ENCODE measurements at regions of chr1 and their contacts with region 1.

Region 1: DNA sequence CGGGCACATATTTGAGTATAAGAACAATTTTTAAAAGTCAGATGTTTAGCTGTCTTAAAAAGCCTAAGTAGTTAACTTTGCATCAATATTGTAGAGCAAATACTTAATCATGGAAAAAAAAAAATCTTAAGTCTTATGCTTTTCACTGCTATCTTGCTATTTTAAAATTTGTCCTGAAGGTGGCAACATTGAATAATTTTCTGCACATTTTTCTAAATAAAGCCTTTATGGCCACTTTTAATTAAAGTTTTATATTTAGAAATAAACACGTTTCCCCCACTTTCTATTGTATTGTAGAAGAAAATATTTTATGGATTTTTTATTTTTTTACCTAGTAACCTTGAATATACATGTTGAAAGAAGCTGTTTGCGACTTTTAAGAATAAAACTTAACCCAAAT is 198.8 kb downstream of the AMY1C start:
- DNase-seq: no peak
- H3K4me3 Mint-ChIP-seq: no peak overlapping the region
- H3K27ac Mint-ChIP-seq: no peak overlapping the region
- H3K4me1 Mint-ChIP-seq: peaks cover 8% of the 10 kb centered on the region
- H3K27me3 Mint-ChIP-seq: no peaks in the 10 kb centered on the region
- CTCF ChIP-seq: no peak

Region 2: DNA sequence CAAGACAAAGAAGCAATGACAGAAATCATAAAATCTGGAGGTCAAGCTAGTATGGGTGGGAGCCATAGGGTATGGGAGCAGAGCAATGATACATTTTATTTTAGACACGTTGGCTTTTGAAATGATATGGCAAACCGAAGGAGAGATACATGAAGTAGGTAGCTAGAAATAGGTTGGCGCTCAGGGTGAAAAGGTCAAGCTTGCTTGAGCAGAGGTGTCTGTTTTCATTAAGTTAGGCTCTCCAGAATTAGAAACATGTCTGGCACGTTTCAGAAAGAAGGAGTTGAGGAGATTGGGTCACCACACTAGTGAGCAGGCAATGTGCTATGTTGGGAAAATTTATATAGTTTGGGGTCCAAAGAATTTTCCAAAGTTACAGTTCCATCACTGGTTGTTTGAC is 47.5 kb before region 1 on chr1:
- CTCF ChIA-PET with region 1: no interaction called
- intact Hi-C with region 1: no loop called
- DNase-seq: no peak
- H3K4me3 Mint-ChIP-seq: no peak overlapping the region
- H3K27ac Mint-ChIP-seq: no peak overlapping the region
- H3K4me1 Mint-ChIP-seq: no peaks in the 10 kb centered on the region
- H3K27me3 Mint-ChIP-seq: no peaks in the 10 kb centered on the region
- CTCF ChIP-seq: no peak

Region 3: GRCh38 chr1:104028416-104029035 is 80.0 kb after region 1 on chr1:
- CTCF ChIA-PET with region 1: no interaction called
- intact Hi-C with region 1: no loop called
- DNase-seq: no peak
- H3K4me3 Mint-ChIP-seq: no peak overlapping the region
- H3K27ac Mint-ChIP-seq: no peak overlapping the region
- H3K4me1 Mint-ChIP-seq: peaks cover 8% of the 10 kb centered on the region
- H3K27me3 Mint-ChIP-seq: no peaks in the 10 kb centered on the region
- CTCF ChIP-seq: no peak

Region 4: DNA sequence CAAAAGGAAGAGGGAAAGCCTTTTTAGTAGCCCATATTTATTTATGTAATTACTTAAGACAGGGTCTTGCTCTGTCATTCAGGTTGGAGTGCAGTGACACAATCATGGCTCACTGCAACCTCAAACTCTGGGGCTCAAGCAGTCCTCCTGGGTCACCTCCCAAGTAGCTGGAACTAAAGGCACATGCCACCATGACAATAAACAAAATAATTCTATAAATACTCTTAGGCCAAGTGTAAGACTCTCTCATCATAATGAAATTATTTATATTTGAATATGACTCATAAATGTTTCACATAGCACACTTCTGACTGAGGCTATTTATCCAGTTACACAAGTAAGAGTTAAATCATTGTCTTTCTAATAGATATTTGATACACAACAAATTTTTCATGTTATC is 115.9 kb after region 1 on chr1:
- CTCF ChIA-PET with region 1: no interaction called
- intact Hi-C with region 1: loop called (anchors 5 kb)
- DNase-seq: peak; percentile 10
- H3K4me3 Mint-ChIP-seq: no peak overlapping the region
- H3K27ac Mint-ChIP-seq: no peak overlapping the region
- H3K4me1 Mint-ChIP-seq: no peaks in the 10 kb centered on the region
- H3K27me3 Mint-ChIP-seq: no peaks in the 10 kb centered on the region
- CTCF ChIP-seq: no peak

Region 5: DNA sequence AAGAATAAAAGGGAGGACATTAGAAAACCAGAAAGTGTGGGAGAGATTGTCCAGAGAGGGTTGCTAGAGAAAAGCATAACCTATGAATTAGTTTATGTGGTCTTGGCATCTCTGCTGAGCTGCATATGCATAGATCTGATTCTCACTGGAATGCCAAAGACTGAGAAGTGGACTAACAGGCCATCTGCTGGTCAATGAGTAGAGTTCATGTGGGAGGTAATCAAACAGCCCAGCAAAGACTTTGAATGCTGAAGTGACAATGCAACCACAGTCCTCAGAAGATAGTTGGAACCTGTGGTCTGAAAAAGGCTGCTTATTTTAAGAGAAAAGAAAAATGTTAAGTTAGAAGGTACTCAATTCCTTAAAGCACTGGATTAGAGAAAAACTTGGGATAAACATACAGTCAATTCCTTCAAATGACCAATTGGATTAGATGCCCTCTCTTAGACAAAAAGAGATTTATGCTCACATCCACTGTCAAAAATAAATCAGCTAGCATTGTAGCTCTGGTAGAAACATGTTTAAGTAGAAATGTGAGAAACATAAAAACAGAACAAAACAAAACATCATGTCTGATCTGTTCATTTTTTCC is 184.0 kb after region 1 on chr1:
- CTCF ChIA-PET with region 1: interaction called, 5 read pairs
- intact Hi-C with region 1: loop called (anchors 1 kb)
- DNase-seq: peak; percentile 8
- H3K4me3 Mint-ChIP-seq: no peak overlapping the region
- H3K27ac Mint-ChIP-seq: no peak overlapping the region
- H3K4me1 Mint-ChIP-seq: no peaks in the 10 kb centered on the region
- H3K27me3 Mint-ChIP-seq: no peaks in the 10 kb centered on the region
- CTCF ChIP-seq: no peak

Region 6: GRCh38 chr1:104156738-104157137 is 208.2 kb after region 1 on chr1:
- CTCF ChIA-PET with region 1: no interaction called
- intact Hi-C with region 1: no loop called
- DNase-seq: no peak
- H3K4me3 Mint-ChIP-seq: no peak overlapping the region
- H3K27ac Mint-ChIP-seq: no peak overlapping the region
- H3K4me1 Mint-ChIP-seq: no peaks in the 10 kb centered on the region
- H3K27me3 Mint-ChIP-seq: no peaks in the 10 kb centered on the region
- CTCF ChIP-seq: no peak

Region 7: DNA sequence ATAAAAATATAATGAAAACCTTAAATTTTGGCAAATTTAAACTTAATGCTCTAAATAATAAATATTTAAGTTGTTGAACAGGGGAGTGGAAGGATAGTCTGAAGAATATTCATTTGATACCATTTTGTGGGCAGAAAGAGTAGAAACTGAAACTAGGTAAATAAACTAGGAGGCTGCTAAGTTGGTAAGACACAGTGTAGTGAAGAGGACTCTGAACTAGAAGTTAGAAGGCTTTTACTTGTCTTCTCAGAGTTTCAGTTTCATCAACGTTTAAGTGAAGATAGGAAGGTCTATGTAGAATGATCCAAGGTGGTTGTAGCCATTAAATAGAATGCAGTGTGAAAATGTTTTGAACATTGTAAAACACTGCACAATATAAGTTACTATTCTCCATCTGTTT is 318.1 kb after region 1 on chr1:
- CTCF ChIA-PET with region 1: no interaction called
- intact Hi-C with region 1: loop called (anchors 10 kb)
- DNase-seq: no peak
- H3K4me3 Mint-ChIP-seq: no peak overlapping the region
- H3K27ac Mint-ChIP-seq: no peak overlapping the region
- H3K4me1 Mint-ChIP-seq: no peaks in the 10 kb centered on the region
- H3K27me3 Mint-ChIP-seq: no peaks in the 10 kb centered on the region
- CTCF ChIP-seq: no peak

Region 8: GRCh38 chr1:104636581-104636980 is 688.1 kb after region 1 on chr1:
- CTCF ChIA-PET with region 1: no interaction called
- intact Hi-C with region 1: loop called (anchors 10 kb)
- DNase-seq: no peak
- H3K4me3 Mint-ChIP-seq: no peak overlapping the region
- H3K27ac Mint-ChIP-seq: no peak overlapping the region
- H3K4me1 Mint-ChIP-seq: no peaks in the 10 kb centered on the region
- H3K27me3 Mint-ChIP-seq: no peaks in the 10 kb centered on the region
- CTCF ChIP-seq: no peak

Measured in Calu3 (cell line).